Posterior cingulate gyrus (tissue), 11 donors: ENCODE measurements at regions of chr2 and their contacts with region 1.

Region 1: DNA sequence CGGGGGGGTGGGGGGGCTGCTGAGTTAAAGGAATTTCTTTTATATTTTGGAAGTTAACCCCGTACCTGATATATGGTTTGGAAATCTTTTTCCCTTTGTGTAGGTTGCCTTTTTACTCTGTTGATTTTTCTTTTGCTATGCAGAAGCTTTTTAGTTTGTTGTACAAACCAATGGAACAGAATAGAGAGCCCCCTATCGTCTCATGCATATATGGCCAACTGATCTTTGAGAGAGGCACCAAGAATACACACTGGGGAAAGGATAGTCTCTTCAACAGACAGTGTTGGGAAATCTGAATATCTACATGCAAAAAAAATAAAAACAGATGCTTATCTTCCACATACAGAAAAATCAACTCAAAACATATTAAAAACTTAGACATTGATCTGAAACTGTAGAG is 647.8 kb upstream of the KLHL29 start:
- DNase-seq: no peak

Region 2: GRCh38 chr2:22355816-22356433 is 381.2 kb before region 1 on chr2:
- intact Hi-C with region 1: loop called (anchors 10 kb)
- DNase-seq: peak; percentile 32 to 90 (median 74)